Right cardiac atrium (tissue), 5 donors: ENCODE measurements at regions of chr10 and their contacts with region 1.

Region 1: DNA sequence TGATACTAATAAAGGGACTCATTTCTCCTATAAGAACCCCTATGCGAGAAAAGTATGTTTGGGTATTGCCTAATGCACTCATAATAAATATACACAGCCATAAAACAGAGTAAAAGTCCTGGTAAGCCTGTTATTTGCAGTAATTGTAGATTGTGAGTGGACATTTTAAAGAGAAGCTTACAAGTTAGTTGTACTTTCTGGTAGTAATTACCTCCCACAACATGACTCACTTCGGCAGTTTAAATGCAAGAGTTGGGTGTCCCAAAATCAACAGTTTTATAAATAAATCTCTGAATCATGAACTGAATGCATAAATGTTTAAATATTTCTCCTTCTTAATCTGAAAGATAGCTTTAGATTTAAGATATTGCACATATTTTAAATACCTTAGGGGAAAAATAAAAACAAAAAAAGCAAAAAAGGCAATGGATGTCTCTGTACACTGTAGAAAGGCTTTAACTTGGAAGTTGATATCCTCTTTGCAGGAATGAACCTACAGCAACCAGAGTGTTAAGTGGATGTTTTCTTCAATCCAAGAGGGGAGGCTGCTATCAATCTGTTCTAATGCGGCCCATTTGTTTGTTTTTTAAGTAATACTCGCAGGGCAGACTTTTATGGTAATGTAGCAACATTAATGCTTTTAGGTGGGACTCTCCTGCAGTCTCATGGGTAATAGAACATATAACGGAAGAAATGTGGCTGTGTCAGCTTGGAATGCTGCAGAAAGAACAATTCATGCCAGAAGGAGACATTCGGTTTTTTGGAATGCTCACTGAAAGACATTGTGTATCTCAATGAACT is 57.3 kb upstream of the ZEB1 start:
- DNase-seq: no peak
- ATAC-seq: peak in 1 of 2 donors; percentile 13
- H3K4me3 ChIP-seq: peak overlapping the region; percentile 1
- H3K27ac ChIP-seq: no peak overlapping the region
- H3K4me1 ChIP-seq: peaks cover 7% of the 10 kb centered on the region
- H3K27me3 ChIP-seq: no peaks in the 10 kb centered on the region

Region 2: DNA sequence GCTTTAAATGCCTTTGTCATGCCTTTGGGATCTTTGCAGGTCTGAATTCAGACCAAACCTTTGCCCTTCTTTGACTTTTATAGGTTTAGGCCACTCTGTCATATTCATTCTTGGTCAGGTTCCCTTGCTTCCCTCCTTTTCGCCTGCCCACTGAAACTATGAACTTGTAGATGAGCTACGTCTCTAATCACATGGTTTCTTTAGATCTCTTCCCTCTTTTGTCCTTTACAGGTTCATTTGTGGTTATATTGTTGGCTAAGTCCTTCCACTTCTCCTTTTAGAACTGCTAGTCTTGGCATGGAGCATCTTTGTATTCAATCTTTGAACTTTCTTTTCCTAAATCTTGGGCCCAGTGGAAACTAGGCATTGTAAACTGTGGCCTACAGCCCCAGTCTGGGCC is 46.7 kb before region 1 on chr10:
- intact Hi-C with region 1: loop called in 1 of 4 experiments (anchors 10 kb)
- DNase-seq: no peak
- ATAC-seq: no peak
- H3K4me3 ChIP-seq: no peak overlapping the region
- H3K27ac ChIP-seq: no peak overlapping the region
- H3K4me1 ChIP-seq: no peaks in the 10 kb centered on the region
- H3K27me3 ChIP-seq: no peaks in the 10 kb centered on the region